Caco-2 (cell line): ENCODE measurements at regions of chr2 and their contacts with region 1.

Region 1: DNA sequence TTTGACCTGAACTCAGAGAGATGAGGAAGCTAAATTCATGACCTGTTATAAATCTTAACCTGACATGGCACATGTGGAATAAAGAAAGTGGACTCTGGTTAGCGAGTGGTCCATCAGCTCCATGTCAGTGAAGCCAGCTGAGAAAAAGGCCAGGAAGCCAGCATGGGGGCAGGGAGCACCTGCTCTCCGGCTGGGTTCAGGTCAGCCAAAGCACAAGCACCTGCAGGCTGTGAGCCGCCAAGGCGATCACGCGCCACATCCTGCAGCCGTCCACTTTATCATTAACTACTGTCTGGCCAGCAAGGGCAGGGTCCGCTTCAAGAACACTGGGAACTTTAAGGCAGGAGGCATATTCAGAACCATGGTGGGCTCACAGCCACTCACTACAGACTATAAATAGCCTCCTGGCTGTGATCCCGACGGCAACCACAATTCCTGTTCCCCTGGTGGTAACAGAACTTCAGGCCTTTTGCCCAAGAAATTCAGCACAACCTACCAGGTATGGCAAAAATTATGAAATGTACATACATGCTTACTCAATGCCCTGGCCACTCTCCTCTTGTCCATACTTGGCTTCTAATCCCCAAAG is 35.5 kb downstream of the ACVR1 start:
- DNase-seq: no peak
- H3K4me3 ChIP-seq: no peak overlapping the region
- H3K4me3 Mint-ChIP-seq: no peak overlapping the region
- H3K27ac Mint-ChIP-seq: no peak overlapping the region
- H3K4me1 ChIP-seq: no peaks in the 10 kb centered on the region
- H3K4me1 Mint-ChIP-seq: no peaks in the 10 kb centered on the region
- H3K27me3 ChIP-seq: no peaks in the 10 kb centered on the region
- H3K27me3 Mint-ChIP-seq: no peaks in the 10 kb centered on the region
- CTCF ChIP-seq: no peak

Region 2: DNA sequence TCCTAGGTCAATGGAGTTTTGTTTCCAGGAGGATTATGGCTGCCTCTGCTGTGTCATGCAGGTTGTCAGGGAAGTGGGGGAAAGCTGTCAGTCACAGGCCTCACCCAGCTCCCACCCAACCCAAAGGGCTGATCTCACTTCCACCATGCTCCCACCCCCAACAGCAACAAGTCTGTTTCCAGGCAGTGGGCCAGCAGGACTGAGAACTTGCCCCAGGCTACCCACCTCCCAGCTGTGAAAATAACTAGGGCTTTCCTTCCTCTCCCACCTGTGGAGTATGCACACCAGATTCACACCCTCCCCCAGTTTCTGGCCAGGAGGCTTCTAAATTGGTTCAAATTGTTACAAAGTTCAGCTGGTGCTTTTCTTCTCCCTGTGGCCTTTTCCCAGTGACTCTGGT is 131.0 kb after region 1 on chr2:
- CTCF ChIA-PET with region 1: no interaction called
- POLR2A ChIA-PET with region 1: no interaction called
- intact Hi-C with region 1: no loop called
- DNase-seq: no peak
- H3K4me3 ChIP-seq: no peak overlapping the region
- H3K4me3 Mint-ChIP-seq: no peak overlapping the region
- H3K27ac Mint-ChIP-seq: no peak overlapping the region
- H3K4me1 ChIP-seq: no peaks in the 10 kb centered on the region
- H3K4me1 Mint-ChIP-seq: no peaks in the 10 kb centered on the region
- H3K27me3 ChIP-seq: no peaks in the 10 kb centered on the region
- H3K27me3 Mint-ChIP-seq: peaks cover 7% of the 10 kb centered on the region
- CTCF ChIP-seq: no peak

Region 3: GRCh38 chr2:159201360-159202063 is 1360.8 kb after region 1 on chr2:
- CTCF ChIA-PET with region 1: no interaction called
- POLR2A ChIA-PET with region 1: no interaction called
- intact Hi-C with region 1: loop called (anchors 5 kb)
- DNase-seq: no peak
- H3K4me3 ChIP-seq: no peak overlapping the region
- H3K4me3 Mint-ChIP-seq: no peak overlapping the region
- H3K27ac Mint-ChIP-seq: no peak overlapping the region
- H3K4me1 ChIP-seq: no peaks in the 10 kb centered on the region
- H3K4me1 Mint-ChIP-seq: no peaks in the 10 kb centered on the region
- H3K27me3 ChIP-seq: no peaks in the 10 kb centered on the region
- H3K27me3 Mint-ChIP-seq: no peaks in the 10 kb centered on the region
- CTCF ChIP-seq: no peak